PC-9 (cell line): ENCODE measurements at regions of chr1 and their contacts with region 1.

Region 1: GRCh38 chr1:83027511-83027910 is 971.4 kb downstream of the TTLL7 start:
- DNase-seq: no peak
- H3K4me3 ChIP-seq: no peak overlapping the region
- H3K27ac ChIP-seq: no peak overlapping the region
- H3K4me1 ChIP-seq: no peaks in the 10 kb centered on the region
- H3K27me3 ChIP-seq: no peaks in the 10 kb centered on the region
- CTCF ChIP-seq: no peak

Region 2: GRCh38 chr1:83075107-83075506 is 47.6 kb after region 1 on chr1:
- CTCF ChIA-PET with region 1: interaction called, 11 read pairs
- POLR2A ChIA-PET with region 1: no interaction called
- intact Hi-C with region 1: no loop called
- DNase-seq: no peak
- H3K4me3 ChIP-seq: no peak overlapping the region
- H3K27ac ChIP-seq: no peak overlapping the region
- H3K4me1 ChIP-seq: no peaks in the 10 kb centered on the region
- H3K27me3 ChIP-seq: no peaks in the 10 kb centered on the region
- CTCF ChIP-seq: no peak